ENCODE measurements at regions of chr1 and their contacts with region 1.

Region 1: GRCh38 chr1:100351095-100351891 is 1.0 kb upstream of the CDC14A start:
- DNase-seq: peak; percentile 94
- ATAC-seq: peak; percentile 71
- H3K4me3 Mint-ChIP-seq: peak overlapping the region; percentile 98
- H3K27ac Mint-ChIP-seq: peak overlapping the region; percentile 100
- H3K4me1 Mint-ChIP-seq: peaks cover 28% of the 10 kb centered on the region
- H3K27me3 Mint-ChIP-seq: no peaks in the 10 kb centered on the region; the same call in 1 of the 2 replicates
- CTCF ChIP-seq: no peak

Region 2: DNA sequence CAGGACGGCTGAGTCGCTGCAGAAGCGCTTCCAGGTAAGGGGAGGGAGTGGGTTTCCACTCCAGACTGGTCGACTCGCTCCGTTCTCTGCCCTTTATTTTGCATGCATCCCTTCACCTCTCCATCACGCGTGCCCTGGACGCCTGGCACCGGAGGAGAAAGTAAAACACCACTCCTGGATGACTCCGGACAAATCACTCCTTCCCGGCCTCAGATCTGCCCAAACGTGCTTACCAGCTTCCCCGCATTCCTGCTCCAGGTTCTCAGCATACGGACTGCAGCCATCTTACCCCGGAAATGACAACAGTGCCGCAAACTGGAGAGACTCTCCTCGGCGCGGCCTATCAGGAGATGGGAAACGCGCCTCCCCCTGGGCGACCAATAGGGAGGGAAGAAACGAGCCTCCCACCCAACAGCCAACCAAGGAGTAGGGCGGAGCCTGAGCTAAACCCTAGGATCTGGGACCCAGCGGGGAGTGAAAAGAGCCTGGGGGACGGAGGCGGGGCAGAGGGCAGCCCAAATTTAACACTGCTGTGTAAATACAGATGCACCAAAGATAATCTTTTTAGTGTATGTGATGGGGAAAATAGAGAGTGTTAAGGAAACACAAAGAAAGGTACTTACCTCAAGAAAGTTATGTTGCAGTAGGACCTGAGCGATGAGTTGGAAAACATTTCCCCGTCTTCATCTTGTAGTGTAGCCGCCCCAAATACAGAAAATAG is 101.6 kb before region 1 on chr1 and contains the start of gene DBT:
- CTCF ChIA-PET with region 1: interaction called, 3 read pairs
- POLR2A ChIA-PET with region 1: interaction called, 13 read pairs
- DNase-seq: peak; percentile 97
- ATAC-seq: peak; percentile 100
- H3K4me3 Mint-ChIP-seq: no peak within 1 kb of the TSS
- H3K27ac Mint-ChIP-seq: peak within 1 kb of the TSS; percentile 70
- H3K4me1 Mint-ChIP-seq: peaks cover 12% of the 10 kb centered on the region
- H3K27me3 Mint-ChIP-seq: no peaks in the 10 kb centered on the region
- CTCF ChIP-seq: no peak
- total RNA-seq, gene DBT: 20.1 to 22.9 TPM (median 21.6 TPM) in 3 replicates

Region 3: DNA sequence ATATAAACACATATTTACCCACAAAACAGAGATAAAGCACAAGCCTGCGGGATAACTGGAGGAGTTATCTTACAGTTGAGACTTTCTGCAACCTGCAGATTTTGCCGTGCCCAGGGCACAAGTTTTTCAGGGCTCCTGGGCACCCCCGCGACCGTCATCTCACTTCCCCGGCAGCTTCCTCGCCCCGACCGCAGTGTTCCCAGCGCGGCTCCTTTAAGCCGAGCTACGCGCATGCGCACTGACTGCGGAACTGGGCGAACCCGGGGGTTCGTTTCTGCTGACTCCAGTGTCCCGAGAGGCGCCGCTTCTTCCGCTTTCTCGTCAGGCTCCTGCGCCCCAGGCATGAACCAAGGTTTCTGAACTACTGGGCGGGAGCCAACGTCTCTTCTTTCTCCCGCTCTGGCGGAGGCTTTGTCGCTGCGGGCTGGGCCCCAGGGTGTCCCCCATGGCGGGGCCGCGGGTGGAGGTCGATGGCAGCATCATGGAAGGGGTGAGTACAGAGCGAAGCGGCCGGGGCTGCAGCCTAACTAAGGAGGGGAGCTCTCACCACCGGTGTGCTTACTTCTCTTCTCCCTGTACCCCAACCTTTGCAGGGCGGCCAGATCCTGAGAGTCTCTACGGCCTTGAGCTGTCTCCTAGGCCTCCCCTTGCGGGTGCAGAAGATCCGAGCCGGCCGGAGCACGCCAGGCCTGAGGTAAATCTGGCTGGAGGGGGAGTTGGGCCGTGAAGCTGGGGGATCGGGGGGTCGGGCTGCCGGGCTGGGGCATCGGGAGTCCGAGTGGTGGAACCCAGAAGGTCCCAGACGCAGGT is 85.2 kb before region 1 on chr1 and contains the start of gene RTCA:
- CTCF ChIA-PET with region 1: interaction called, 10 read pairs
- POLR2A ChIA-PET with region 1: interaction called, 34 read pairs
- DNase-seq: peak; percentile 96
- ATAC-seq: peak; percentile 95
- H3K4me3 Mint-ChIP-seq: peak within 1 kb of the TSS; percentile 99
- H3K27ac Mint-ChIP-seq: peak within 1 kb of the TSS; percentile 96
- H3K4me1 Mint-ChIP-seq: peaks cover 10% of the 10 kb centered on the region
- H3K27me3 Mint-ChIP-seq: peaks cover 12% of the 10 kb centered on the region
- CTCF ChIP-seq: no peak
- total RNA-seq, gene RTCA: 31.1 to 35.7 TPM (median 35.2 TPM) in 3 replicates

Region 4: DNA sequence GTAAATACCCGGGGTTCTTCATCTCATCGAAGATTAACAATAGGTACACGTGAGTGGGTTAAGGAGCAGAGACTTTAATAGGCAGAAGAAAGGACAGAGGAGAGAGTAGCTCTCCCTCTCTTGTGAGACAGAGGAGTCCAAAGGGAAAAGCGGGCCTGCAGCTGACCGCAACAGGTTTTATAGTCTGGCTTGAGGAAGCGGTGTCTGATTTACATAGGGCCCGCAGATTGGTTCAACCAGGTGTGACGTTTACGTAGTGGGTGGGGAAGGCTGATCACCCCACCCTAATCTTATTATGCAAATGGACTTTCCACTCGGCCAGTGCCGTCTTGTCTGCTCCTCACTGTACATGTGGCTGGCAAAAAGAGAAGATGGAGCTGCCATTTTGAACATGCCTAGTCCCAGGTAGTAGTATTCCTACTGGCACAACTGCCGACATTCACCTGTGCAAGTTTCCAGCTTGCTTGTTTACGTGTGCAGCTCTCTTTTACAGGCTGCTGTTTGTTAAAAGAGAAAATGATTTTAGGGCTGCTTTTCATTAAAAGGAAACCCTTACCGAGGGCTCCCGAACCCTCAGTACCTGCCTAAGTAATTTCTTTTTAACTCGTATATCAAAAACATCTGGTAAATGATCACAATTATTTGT is 11.7 kb after region 1 on chr1:
- CTCF ChIA-PET with region 1: interaction called, 8 read pairs
- POLR2A ChIA-PET with region 1: interaction called, 15 read pairs
- DNase-seq: peak; percentile 52
- ATAC-seq: peak; percentile 85
- H3K4me3 Mint-ChIP-seq: no peak overlapping the region
- H3K27ac Mint-ChIP-seq: peak overlapping the region; percentile 63; the same call in 1 of the 2 replicates
- H3K4me1 Mint-ChIP-seq: peaks cover 37% of the 10 kb centered on the region
- H3K27me3 Mint-ChIP-seq: no peaks in the 10 kb centered on the region
- CTCF ChIP-seq: no peak

Region 5: DNA sequence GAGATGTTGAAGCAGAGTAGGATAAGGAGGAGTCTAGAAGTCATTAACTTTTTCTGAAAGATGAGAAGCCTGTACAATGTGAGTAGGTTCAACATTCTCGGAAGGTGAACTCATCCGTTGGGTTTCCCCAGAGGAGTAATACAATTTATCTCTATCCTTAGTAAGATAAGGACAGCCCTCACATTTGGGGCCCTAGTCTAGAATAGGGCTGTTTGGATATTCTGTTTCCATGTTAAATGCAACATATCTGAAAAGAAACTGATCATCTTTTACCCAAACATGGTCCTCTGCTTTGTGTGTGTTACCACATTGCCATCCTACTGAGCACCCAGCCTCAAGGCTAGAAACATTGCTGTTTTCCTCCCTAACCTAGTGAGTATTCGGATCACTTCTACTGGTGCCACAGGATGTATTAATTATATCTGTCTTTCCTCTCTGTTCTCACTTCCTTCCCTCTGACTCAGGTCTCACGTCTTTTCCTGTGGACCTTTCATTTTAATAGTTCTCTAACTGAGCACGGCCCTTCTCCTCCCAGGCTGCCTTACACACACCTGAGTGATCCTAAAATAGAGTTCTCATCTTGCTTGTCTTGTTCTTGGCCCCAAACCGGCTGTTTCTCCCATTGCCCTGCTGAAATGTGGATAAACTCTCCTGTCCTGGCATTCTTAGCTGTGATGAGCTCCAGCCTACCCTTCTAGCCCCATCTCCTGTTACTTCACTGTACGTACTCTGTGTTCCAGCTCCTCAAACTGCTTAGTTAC is 92.7 kb after region 1 on chr1:
- CTCF ChIA-PET with region 1: no interaction called
- POLR2A ChIA-PET with region 1: no interaction called
- DNase-seq: no peak
- ATAC-seq: no peak
- H3K4me3 Mint-ChIP-seq: no peak overlapping the region
- H3K27ac Mint-ChIP-seq: peak overlapping the region; percentile 60
- H3K4me1 Mint-ChIP-seq: peaks cover 9% of the 10 kb centered on the region
- H3K27me3 Mint-ChIP-seq: no peaks in the 10 kb centered on the region
- CTCF ChIP-seq: no peak